Esophagus muscularis mucosa (tissue), 4 donors: ENCODE measurements at regions of chr18 and their contacts with region 1.

Region 1: GRCh38 chr18:11149441-11150270 is at the start of gene PIEZO2:
- DNase-seq: peak; percentile 90
- H3K4me3 ChIP-seq: peak within 1 kb of the TSS; percentile 48 to 62 (median 51)
- H3K27ac ChIP-seq: peak within 1 kb of the TSS in 1 of 4 donors; percentile 4
- H3K4me1 ChIP-seq: peaks cover 16 to 27% (median 19%) of the 10 kb centered on the region in 4 donors
- H3K27me3 ChIP-seq: peaks cover 0 to 61% (median 24%) of the 10 kb centered on the region in 4 donors
- CTCF ChIP-seq: no peak
- EP300 ChIP-seq: no peak
- POLR2A ChIP-seq: no peak
- total RNA-seq, gene PIEZO2: 2.4 to 5.2 (median 3.3) TPM

Region 2: DNA sequence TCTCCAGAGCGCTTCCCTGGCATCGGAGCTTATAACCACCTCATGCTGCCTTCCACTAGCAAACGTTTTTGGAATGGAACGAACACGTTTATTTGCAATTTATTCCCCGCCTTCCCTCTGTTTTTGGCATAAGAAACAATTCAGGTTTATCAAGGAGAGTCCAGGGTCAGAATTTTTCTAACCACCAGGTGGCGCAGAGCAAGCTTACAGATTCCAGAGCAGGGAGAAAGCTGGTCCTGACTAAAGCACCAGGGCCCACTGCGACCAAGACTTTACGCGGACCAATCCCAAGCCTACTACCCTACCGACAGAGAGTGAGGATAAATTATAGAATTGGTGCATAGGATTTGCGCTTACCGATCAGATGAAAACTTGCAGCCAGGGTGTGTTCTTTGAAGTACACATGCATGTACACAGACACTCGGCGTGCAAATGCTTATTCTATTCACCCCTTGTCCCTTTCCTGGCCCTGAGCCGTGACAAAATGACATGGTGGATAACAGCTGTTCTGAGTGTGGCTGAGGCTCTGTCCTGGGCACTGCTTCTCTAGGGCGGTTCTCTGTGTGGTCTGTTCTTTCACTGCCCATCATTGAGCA is 589.1 kb before region 1 on chr18:
- intact Hi-C with region 1: loop called (anchors 5 kb)
- DNase-seq: no peak
- H3K4me3 ChIP-seq: peak overlapping the region; percentile 30 to 43 (median 32)
- H3K27ac ChIP-seq: no peak overlapping the region
- H3K4me1 ChIP-seq: peaks cover 8 to 24% (median 12%) of the 10 kb centered on the region in 4 donors
- H3K27me3 ChIP-seq: no peaks in the 10 kb centered on the region
- CTCF ChIP-seq: peak; percentile 48 to 81 (median 73)
- EP300 ChIP-seq: no peak
- POLR2A ChIP-seq: no peak

Region 3: DNA sequence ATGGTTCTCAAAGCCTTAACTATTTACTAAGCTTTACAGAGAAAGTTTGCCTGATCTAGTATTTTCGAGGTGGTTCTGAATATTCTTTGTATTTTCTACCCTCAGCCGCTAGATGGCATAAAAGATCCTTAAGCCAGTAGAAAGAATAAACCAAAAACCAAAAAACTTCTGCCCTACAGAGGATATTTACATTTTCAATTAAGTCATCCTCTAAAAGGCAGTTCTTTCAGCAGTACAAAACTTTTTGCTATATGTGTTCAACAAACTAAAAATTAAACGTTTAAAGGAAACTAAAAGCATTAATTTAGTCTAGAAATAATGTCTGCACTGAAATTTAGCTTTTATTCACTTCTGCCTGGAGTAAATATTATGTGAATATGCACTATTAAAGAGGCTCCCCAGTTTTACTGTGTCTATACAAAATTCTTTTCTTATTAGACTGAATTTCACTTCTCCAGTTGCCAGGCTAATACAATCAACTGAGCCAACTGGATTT is 297.8 kb before region 1 on chr18:
- intact Hi-C with region 1: loop called (anchors 5 kb)
- DNase-seq: no peak
- H3K4me3 ChIP-seq: no peak overlapping the region
- H3K27ac ChIP-seq: no peak overlapping the region
- H3K4me1 ChIP-seq: peaks cover 0 to 6% (median 0%) of the 10 kb centered on the region in 4 donors
- H3K27me3 ChIP-seq: peaks cover 0 to 9% (median 0%) of the 10 kb centered on the region in 4 donors
- CTCF ChIP-seq: peak; percentile 72 to 75 (median 74)
- EP300 ChIP-seq: no peak
- POLR2A ChIP-seq: no peak